Activated naive CD4-positive, alpha-beta T cell treated with anti-CD3 and anti-CD28 coated beads for 36 hours (primary cell): ENCODE measurements at regions of chr1 and their contacts with region 1.

Region 1: DNA sequence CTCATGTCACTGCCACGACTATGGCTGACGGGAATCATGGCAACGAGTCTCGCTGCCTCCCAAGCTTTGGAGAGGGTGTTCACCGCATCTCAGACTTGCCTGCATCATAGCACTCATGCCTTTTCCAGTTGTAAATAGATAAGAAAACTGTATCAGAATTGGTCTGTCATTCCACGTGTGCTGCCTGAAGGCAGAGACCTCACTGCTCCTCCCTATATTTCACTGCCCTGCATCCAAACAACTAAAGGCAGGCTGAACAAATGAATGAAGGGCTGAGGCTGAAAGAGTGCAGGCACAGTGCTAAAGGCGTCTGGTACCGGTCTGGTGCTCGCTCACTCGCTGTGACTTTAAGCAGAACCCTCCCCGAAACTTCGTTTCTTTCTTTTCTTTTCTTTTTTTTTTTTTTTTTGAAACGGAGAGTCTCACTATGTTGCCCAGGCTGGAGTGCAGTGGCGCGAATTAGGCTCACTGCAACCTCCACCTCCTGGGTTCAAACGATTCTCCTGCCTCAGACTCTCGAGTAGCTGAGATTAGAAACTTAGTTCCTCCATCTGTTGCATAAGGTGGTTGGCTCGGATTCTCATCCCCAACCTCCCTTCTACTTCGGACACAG is 542 bp downstream of the EIF2B3 start:
- DNase-seq: no peak
- H3K4me3 Mint-ChIP-seq: peak overlapping the region; percentile 100
- H3K27ac Mint-ChIP-seq: peak overlapping the region; percentile 80
- H3K4me1 Mint-ChIP-seq: peaks cover 23% of the 10 kb centered on the region
- H3K27me3 Mint-ChIP-seq: no peaks in the 10 kb centered on the region

Region 2: GRCh38 chr1:44775078-44775929 is 210.5 kb before region 1 on chr1 and contains the start of gene RPS8:
- CTCF ChIA-PET with region 1: no interaction called
- intact Hi-C with region 1: loop called (anchors 1 kb)
- DNase-seq: peak; percentile 94
- H3K4me3 Mint-ChIP-seq: peak within 1 kb of the TSS; percentile 95
- H3K27ac Mint-ChIP-seq: peak within 1 kb of the TSS; percentile 92
- H3K4me1 Mint-ChIP-seq: peaks cover 32% of the 10 kb centered on the region
- H3K27me3 Mint-ChIP-seq: no peaks in the 10 kb centered on the region
- total RNA-seq, gene RPS8: 3,619 to 3,772 TPM

Region 3: GRCh38 chr1:44835738-44836675 is 149.8 kb before region 1 on chr1:
- CTCF ChIA-PET with region 1: interaction called, 3 read pairs
- intact Hi-C with region 1: loop called (anchors 1 kb)
- DNase-seq: peak; percentile 98
- H3K4me3 Mint-ChIP-seq: no peak overlapping the region
- H3K27ac Mint-ChIP-seq: no peak overlapping the region
- H3K4me1 Mint-ChIP-seq: peaks cover 5% of the 10 kb centered on the region
- H3K27me3 Mint-ChIP-seq: peaks cover 9% of the 10 kb centered on the region

Region 4: GRCh38 chr1:45059829-45060228 is 74.0 kb after region 1 on chr1:
- CTCF ChIA-PET with region 1: no interaction called
- intact Hi-C with region 1: no loop called
- DNase-seq: no peak
- H3K4me3 Mint-ChIP-seq: no peak overlapping the region
- H3K27ac Mint-ChIP-seq: no peak overlapping the region
- H3K4me1 Mint-ChIP-seq: no peaks in the 10 kb centered on the region
- H3K27me3 Mint-ChIP-seq: no peaks in the 10 kb centered on the region